ENCODE measurements at regions of chr19 and their contacts with region 1.

Region 1: GRCh38 chr19:50777754-50778303 is 7.6 kb downstream of the GPR32 start:
- H3K4me3 ChIP-seq: peak overlapping the region; percentile 16
- H3K27ac ChIP-seq: no peak overlapping the region
- H3K4me1 ChIP-seq: 0 out of 2 replicates have a peak, but pooled peaks cover 2% of the 10 kb centered on the region
- CTCF ChIP-seq: no peak

Region 2: GRCh38 chr19:50556282-50557008 is 221.4 kb before region 1 on chr19:
- CTCF ChIA-PET with region 1: interaction called, 15 read pairs
- POLR2A ChIA-PET with region 1: no interaction called
- H3K4me3 ChIP-seq: peak overlapping the region; percentile 42
- H3K27ac ChIP-seq: peak overlapping the region; percentile 46; the same call in 1 of the 2 replicates
- H3K4me1 ChIP-seq: peaks cover 4% of the 10 kb centered on the region; the same call in 1 of the 2 replicates
- CTCF ChIP-seq: peak; percentile 98

Region 3: DNA sequence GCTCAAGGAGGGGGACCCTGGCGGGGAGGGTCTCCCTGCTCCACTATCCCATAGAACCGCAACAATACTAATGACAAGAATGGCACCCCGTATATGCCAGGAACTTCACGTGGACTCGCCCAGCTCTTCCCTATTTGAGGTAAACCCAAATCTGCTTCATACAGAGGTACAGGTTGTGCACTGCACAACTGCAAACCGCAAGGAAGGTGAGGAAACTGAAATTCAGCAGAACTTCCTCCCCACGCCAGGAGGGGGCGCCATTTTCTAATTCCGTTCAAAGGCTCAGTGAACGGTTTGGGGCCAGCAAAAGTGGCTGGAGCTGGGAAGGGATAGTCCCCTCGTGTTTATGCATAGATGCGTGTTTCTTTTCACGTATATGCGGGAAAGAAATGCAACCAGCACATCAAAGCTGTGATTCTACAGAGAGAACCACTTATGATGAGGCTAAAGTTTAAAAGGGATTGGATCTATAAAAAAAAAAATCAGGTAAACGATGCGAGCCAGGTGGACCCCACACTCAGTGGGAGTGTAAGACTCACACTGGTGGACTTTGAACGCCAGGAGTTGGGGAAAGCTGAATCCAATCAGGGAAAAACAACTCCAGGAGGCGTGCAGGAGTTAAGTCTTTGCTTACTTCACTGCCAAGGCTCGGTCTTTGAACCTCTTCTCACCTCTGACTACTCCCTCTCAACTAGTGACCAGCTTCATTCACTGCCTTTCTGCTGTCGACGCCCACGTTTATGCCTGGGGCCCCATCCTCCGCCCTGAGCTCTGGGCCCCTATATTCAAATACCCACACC is 108.3 kb before region 1 on chr19:
- CTCF ChIA-PET with region 1: interaction called, 14 read pairs
- POLR2A ChIA-PET with region 1: no interaction called
- H3K4me3 ChIP-seq: no peak overlapping the region
- H3K27ac ChIP-seq: no peak overlapping the region
- H3K4me1 ChIP-seq: no peaks in the 10 kb centered on the region
- CTCF ChIP-seq: peak; percentile 64

Region 4: DNA sequence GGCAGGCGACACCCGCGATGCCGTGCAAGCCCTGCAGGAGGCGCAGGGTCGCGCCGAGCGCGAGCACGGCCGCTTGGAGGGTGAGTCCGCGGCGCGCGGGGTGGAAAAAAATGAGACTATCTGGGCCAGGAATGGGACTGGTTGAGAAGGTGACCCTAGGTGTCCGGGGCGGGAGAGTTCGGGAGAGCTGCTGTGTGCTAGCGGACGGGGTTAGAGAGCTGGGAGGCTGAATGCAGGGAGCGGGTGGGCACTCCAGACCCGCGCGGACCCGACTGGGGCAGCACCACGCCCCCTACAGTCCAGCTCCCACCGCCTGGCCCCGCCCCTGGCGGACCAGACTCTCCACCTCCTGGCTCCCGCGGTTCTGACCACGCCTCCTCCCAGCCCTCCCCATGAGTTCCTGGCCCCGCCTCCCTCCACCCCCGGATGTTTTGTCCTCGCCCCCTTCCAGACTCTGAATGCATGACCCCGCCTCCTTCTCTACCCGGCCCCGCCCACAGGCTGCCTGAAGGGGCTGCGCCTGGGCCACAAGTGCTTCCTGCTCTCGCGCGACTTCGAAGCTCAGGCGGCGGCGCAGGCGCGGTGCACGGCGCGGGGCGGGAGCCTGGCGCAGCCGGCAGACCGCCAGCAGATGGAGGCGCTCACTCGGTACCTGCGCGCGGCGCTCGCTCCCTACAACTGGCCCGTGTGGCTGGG is 53.2 kb before region 1 on chr19:
- CTCF ChIA-PET with region 1: interaction called, 75 read pairs
- POLR2A ChIA-PET with region 1: interaction called, 19 read pairs
- H3K4me3 ChIP-seq: peak overlapping the region; percentile 78
- H3K27ac ChIP-seq: peak overlapping the region; percentile 77
- H3K4me1 ChIP-seq: peaks cover 7% of the 10 kb centered on the region; the same call in 1 of the 2 replicates
- CTCF ChIP-seq: peak; percentile 100

Region 5: GRCh38 chr19:51131780-51132680 is 354.2 kb after region 1 on chr19:
- CTCF ChIA-PET with region 1: interaction called, 10 read pairs
- POLR2A ChIA-PET with region 1: no interaction called
- H3K4me3 ChIP-seq: no peak overlapping the region
- H3K27ac ChIP-seq: no peak overlapping the region; the same call in 1 of the 2 replicates
- H3K4me1 ChIP-seq: peaks cover 12% of the 10 kb centered on the region
- CTCF ChIP-seq: no peak

Measured in HEK293 (cell line).